ENCODE measurements at regions of chr1 and their contacts with region 1.

Region 1: DNA sequence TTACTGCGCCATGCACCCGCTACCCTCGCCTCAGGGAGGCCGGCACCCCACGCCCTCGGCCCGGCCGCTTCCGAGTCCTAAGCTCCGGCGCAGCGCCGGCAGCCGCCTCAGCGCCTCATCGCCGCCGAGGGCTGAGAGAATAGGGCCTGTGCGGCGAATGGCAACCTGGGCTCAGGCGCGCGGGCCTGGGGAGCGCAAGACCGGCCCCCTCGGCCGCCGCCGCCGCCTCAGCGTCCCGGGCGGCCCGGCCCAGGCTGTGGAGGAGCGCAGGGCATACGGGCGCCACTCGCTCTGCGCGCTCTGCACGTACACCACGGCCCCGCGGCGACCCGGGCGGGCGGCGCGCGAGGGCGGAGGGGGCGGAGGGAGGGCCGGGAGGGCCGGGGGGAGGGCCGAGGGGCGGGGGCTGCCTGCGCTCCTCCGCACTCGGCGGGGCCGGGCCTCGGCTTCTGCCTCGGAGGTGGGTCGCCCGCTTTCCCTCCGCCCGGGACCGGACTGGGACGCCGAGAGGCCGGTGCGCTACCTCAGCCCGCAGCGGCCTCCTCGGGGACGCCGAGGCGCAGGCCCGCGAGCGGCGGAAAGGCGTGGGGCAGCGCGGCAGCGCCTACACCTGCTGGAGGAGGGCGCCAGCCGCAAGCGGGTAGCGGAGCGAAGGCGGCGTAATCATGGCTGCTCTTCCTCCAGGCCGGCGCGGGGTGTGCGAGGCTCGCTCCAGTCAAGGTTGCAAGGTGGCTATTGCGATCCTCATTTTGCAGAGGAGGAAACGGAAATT is at the start of gene EGLN1:
- DNase-seq: peak; percentile 80 to 89 (median 85)
- H3K4me3 ChIP-seq: peak within 1 kb of the TSS; percentile 73
- H3K27ac ChIP-seq: peak within 1 kb of the TSS; percentile 91 to 99
- H3K4me1 ChIP-seq: peaks cover 7% of the 10 kb centered on the region
- H3K27me3 ChIP-seq: no peaks in the 10 kb centered on the region
- CTCF ChIP-seq: no peak
- EP300 ChIP-seq: no peak
- POLR2A ChIP-seq: peak; percentile 57
- total RNA-seq, gene EGLN1: 26.3 to 52.0 (median 39.1) TPM

Region 2: DNA sequence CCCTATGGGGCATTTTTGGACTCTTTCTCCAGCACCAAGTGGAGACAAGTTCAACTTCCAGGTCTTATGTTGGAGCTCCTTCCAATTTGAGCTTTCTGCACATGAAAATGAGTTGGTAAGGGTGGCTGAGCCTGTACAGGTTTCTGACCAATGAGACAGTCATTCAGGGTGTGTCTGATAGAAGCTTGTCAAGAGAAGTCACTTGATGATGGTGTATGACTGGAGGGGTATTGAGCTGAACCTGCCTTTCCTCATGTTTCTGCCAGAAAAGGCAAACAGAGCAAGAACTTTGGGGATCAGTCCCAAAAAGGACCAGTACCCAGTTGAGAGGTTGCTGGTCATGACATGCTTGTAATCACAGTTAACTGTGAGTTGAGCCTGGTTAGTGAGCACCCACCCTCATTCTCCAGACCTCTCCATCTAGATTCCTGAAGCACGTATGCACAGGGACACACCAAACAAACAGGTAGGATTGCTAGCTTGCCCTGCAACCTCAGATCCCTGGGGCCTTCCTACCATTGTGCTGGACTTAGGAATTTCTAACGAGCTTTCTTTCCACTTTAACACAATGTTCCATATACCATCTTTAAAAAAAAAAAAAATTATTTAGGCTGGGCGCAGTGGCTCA is 408.7 kb before region 1 on chr1:
- intact Hi-C with region 1: no loop called
- DNase-seq: no peak
- H3K4me3 ChIP-seq: no peak overlapping the region
- H3K27ac ChIP-seq: no peak overlapping the region
- H3K4me1 ChIP-seq: no peaks in the 10 kb centered on the region
- H3K27me3 ChIP-seq: no peaks in the 10 kb centered on the region
- CTCF ChIP-seq: no peak
- EP300 ChIP-seq: no peak
- POLR2A ChIP-seq: no peak

Region 3: GRCh38 chr1:231485029-231485784 is 63.0 kb after region 1 on chr1:
- intact Hi-C with region 1: no loop called
- DNase-seq: no peak
- H3K4me3 ChIP-seq: no peak overlapping the region
- H3K27ac ChIP-seq: no peak overlapping the region
- H3K4me1 ChIP-seq: no peaks in the 10 kb centered on the region
- H3K27me3 ChIP-seq: no peaks in the 10 kb centered on the region
- CTCF ChIP-seq: no peak
- EP300 ChIP-seq: no peak
- POLR2A ChIP-seq: no peak

Region 4: GRCh38 chr1:231528172-231529029 is 106.2 kb after region 1 on chr1 and contains the start of gene TSNAX:
- intact Hi-C with region 1: loop called in 2 of 4 experiments (anchors 10 kb)
- DNase-seq: peak; percentile 90 to 95 (median 93)
- H3K4me3 ChIP-seq: peak within 1 kb of the TSS; percentile 91
- H3K27ac ChIP-seq: peak within 1 kb of the TSS; percentile 30 to 95
- H3K4me1 ChIP-seq: peaks cover 6% of the 10 kb centered on the region
- H3K27me3 ChIP-seq: no peaks in the 10 kb centered on the region
- CTCF ChIP-seq: no peak
- EP300 ChIP-seq: no peak
- POLR2A ChIP-seq: peak; percentile 88
- total RNA-seq, gene TSNAX: 19.9 to 43.0 (median 40.7) TPM

Region 5: DNA sequence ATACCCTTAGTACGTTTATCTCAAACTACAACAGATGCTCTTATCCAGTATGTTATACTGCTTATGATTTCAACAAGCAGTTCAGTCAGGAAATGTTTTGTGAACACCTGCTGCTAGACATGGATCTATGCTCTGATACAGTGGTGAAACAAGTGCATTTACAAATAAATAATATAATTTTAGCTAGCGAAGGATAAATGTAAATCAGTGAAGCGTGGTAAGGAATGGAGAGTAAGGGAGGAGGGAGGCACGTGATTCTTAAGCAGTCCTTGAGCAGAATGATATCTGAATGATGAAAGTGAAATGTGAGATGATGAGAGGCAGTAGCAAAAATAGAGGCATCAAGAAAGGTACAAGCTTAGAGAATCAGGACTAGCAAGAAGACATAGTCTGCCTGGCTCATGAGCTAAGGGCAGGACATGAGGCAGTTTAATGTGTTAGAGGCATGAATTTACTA is 112.6 kb after region 1 on chr1:
- intact Hi-C with region 1: loop called in 2 of 4 experiments (anchors 10 kb)
- DNase-seq: no peak
- H3K4me3 ChIP-seq: no peak overlapping the region
- H3K27ac ChIP-seq: no peak overlapping the region
- H3K4me1 ChIP-seq: peaks cover 5% of the 10 kb centered on the region
- H3K27me3 ChIP-seq: no peaks in the 10 kb centered on the region
- CTCF ChIP-seq: no peak
- EP300 ChIP-seq: no peak
- POLR2A ChIP-seq: no peak

Measured in ovary (tissue), 10 donors.